Activated B cell treated with CpG ODN at 0.5 μM for 24 hours (primary cell): ENCODE measurements at regions of chr11 and their contacts with region 1.

Region 1: DNA sequence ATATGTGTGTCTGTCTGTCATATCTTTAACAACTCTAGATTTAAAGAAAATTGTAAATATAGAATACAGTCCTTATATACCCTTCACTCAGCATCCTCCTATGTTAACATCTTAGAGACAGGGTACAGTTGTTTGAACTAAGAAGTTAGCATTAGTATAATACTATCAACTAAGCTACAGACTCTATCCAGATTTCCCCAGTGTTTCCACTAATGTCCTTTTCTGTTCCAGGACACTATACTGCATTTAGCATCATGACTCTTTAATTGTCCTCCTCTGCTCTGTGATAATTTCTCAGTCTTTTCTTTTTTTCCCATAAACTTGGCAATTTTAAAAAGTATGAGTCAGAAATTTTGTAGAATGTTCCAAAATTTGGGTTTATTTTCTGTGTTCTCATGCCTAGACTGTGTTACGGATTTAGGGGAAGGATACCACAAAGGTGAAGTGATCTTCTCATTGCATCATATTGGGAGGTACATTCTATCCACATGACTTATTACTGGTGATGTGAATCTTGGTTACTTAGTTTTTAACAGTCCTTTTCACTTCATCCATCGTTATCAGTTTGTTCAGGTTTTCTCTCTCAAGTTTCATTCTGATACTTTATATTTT is 168.4 kb downstream of the SBF2 start:
- DNase-seq: no peak
- ATAC-seq: no peak
- H3K4me3 Mint-ChIP-seq: no peak overlapping the region
- H3K27ac Mint-ChIP-seq: no peak overlapping the region
- H3K4me1 Mint-ChIP-seq: no peaks in the 10 kb centered on the region
- H3K27me3 Mint-ChIP-seq: no peaks in the 10 kb centered on the region
- CTCF ChIP-seq: no peak

Region 2: GRCh38 chr11:10139656-10140055 is 14.0 kb after region 1 on chr11:
- CTCF ChIA-PET with region 1: no interaction called
- POLR2A ChIA-PET with region 1: interaction called, 4 read pairs
- intact Hi-C with region 1: loop called (anchors 1 kb)
- DNase-seq: no peak
- ATAC-seq: no peak
- H3K4me3 Mint-ChIP-seq: no peak overlapping the region
- H3K27ac Mint-ChIP-seq: no peak overlapping the region
- H3K4me1 Mint-ChIP-seq: no peaks in the 10 kb centered on the region
- H3K27me3 Mint-ChIP-seq: no peaks in the 10 kb centered on the region
- CTCF ChIP-seq: no peak

Region 3: GRCh38 chr11:10441652-10442503 is 316.2 kb after region 1 on chr11:
- CTCF ChIA-PET with region 1: no interaction called
- POLR2A ChIA-PET with region 1: no interaction called
- intact Hi-C with region 1: no loop called
- DNase-seq: no peak
- ATAC-seq: peak; percentile 84
- H3K4me3 Mint-ChIP-seq: peak overlapping the region; percentile 60
- H3K27ac Mint-ChIP-seq: peak overlapping the region; percentile 97
- H3K4me1 Mint-ChIP-seq: peaks cover 48% of the 10 kb centered on the region
- H3K27me3 Mint-ChIP-seq: no peaks in the 10 kb centered on the region
- CTCF ChIP-seq: no peak